CD8-positive, alpha-beta T cell (primary cell): ENCODE measurements at regions of chr14 and their contacts with region 1.

Region 1: DNA sequence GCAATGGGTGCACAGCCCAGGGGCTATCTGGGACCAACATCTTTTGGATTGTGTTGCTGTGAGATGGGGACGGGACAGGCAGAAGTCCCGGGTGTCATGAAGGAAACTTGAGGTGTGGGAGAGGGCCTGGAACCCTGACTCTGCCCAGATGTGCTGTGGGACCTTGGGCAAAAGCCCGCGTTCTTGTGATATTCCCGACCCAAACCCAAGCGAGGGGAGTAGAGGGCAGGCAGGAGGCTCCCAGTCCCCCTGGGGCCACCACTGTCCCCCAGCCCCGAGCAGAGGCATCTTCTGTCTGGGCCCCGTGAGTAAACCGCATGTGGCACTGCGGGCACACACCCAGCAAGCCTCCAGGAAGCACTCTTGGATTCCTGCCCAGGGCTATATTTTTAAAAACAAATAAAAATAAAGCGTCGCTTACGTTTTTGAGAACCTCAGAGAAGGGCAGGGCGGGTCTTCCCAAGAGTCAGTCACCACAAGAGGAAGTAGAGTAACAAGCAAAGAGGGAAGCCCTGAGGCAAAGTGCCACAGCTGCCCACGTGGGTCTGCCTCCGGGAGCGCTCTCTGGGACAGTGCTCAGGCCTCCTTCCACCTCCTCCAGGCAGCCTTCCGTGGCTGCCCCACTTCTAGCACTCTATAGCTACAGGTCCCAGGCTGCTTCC is 39.5 kb downstream of the BEGAIN start:
- DNase-seq: peak; percentile 8 to 91 (median 51)
- ATAC-seq: peak; percentile 52
- H3K4me3 ChIP-seq: peak overlapping the region in 1 of 2 experiments; percentile 68
- H3K4me3 Mint-ChIP-seq: peak overlapping the region; percentile 57
- H3K27ac ChIP-seq: peak overlapping the region; percentile 64 to 67
- H3K27ac Mint-ChIP-seq: peak overlapping the region; percentile 88
- H3K4me1 ChIP-seq: peaks cover 36% of the 10 kb centered on the region
- H3K4me1 Mint-ChIP-seq: peaks cover 24% of the 10 kb centered on the region
- H3K27me3 ChIP-seq: no peaks in the 10 kb centered on the region
- H3K27me3 Mint-ChIP-seq: no peaks in the 10 kb centered on the region
- CTCF ChIP-seq: no peak

Region 2: GRCh38 chr14:99480917-99481744 is 1066.6 kb before region 1 on chr14 and contains the start of gene CCNK:
- CTCF ChIA-PET with region 1: no interaction called
- POLR2A ChIA-PET with region 1: no interaction called
- intact Hi-C with region 1: loop called in 1 of 2 experiments (anchors 5 kb)
- DNase-seq: peak; percentile 100
- ATAC-seq: peak; percentile 87
- H3K4me3 ChIP-seq: peak within 1 kb of the TSS; percentile 97 to 99
- H3K4me3 Mint-ChIP-seq: peak within 1 kb of the TSS; percentile 99
- H3K27ac ChIP-seq: peak within 1 kb of the TSS; percentile 95 to 96
- H3K27ac Mint-ChIP-seq: peak within 1 kb of the TSS; percentile 99
- H3K4me1 ChIP-seq: peaks cover 38% of the 10 kb centered on the region
- H3K4me1 Mint-ChIP-seq: peaks cover 60% of the 10 kb centered on the region
- H3K27me3 ChIP-seq: no peaks in the 10 kb centered on the region
- H3K27me3 Mint-ChIP-seq: no peaks in the 10 kb centered on the region
- CTCF ChIP-seq: no peak
- total RNA-seq, gene CCNK: 171 to 177 TPM

Region 3: GRCh38 chr14:99971087-99971940 is 576.5 kb before region 1 on chr14:
- CTCF ChIA-PET with region 1: no interaction called
- POLR2A ChIA-PET with region 1: no interaction called
- intact Hi-C with region 1: loop called in 1 of 2 experiments (anchors 5 kb)
- DNase-seq: peak; percentile 62 to 89 (median 78)
- ATAC-seq: peak; percentile 92
- H3K4me3 ChIP-seq: peak overlapping the region; percentile 35 to 67
- H3K4me3 Mint-ChIP-seq: peak overlapping the region; percentile 78
- H3K27ac ChIP-seq: no peak overlapping the region
- H3K27ac Mint-ChIP-seq: no peak overlapping the region
- H3K4me1 ChIP-seq: peaks cover 11% of the 10 kb centered on the region
- H3K4me1 Mint-ChIP-seq: peaks cover 12% of the 10 kb centered on the region
- H3K27me3 ChIP-seq: no peaks in the 10 kb centered on the region
- H3K27me3 Mint-ChIP-seq: peaks cover 5% of the 10 kb centered on the region
- CTCF ChIP-seq: no peak

Region 4: GRCh38 chr14:100221533-100222223 is 326.1 kb before region 1 on chr14:
- CTCF ChIA-PET with region 1: no interaction called
- POLR2A ChIA-PET with region 1: no interaction called
- intact Hi-C with region 1: loop called in 1 of 2 experiments (anchors 5 kb)
- DNase-seq: peak; percentile 40 to 85 (median 74)
- ATAC-seq: peak; percentile 96
- H3K4me3 ChIP-seq: peak overlapping the region; percentile 68 to 95
- H3K4me3 Mint-ChIP-seq: no peak overlapping the region
- H3K27ac ChIP-seq: peak overlapping the region; percentile 76 to 77
- H3K27ac Mint-ChIP-seq: no peak overlapping the region
- H3K4me1 ChIP-seq: peaks cover 45% of the 10 kb centered on the region
- H3K4me1 Mint-ChIP-seq: peaks cover 7% of the 10 kb centered on the region
- H3K27me3 ChIP-seq: no peaks in the 10 kb centered on the region
- H3K27me3 Mint-ChIP-seq: no peaks in the 10 kb centered on the region
- CTCF ChIP-seq: no peak

Region 5: GRCh38 chr14:100306420-100307219 is 241.1 kb before region 1 on chr14 and contains the start of gene SLC25A29:
- CTCF ChIA-PET with region 1: no interaction called
- POLR2A ChIA-PET with region 1: no interaction called
- intact Hi-C with region 1: loop called in 1 of 2 experiments (anchors 10 kb)
- DNase-seq: peak; percentile 39 to 89 (median 76)
- ATAC-seq: peak; percentile 77
- H3K4me3 ChIP-seq: peak within 1 kb of the TSS; percentile 60 to 76
- H3K4me3 Mint-ChIP-seq: peak within 1 kb of the TSS; percentile 86
- H3K27ac ChIP-seq: no peak within 1 kb of the TSS
- H3K27ac Mint-ChIP-seq: peak within 1 kb of the TSS; percentile 60
- H3K4me1 ChIP-seq: peaks cover 18% of the 10 kb centered on the region
- H3K4me1 Mint-ChIP-seq: peaks cover 18% of the 10 kb centered on the region
- H3K27me3 ChIP-seq: no peaks in the 10 kb centered on the region
- H3K27me3 Mint-ChIP-seq: no peaks in the 10 kb centered on the region
- CTCF ChIP-seq: no peak
- total RNA-seq, gene SLC25A29: 19.4 to 22.8 TPM

Region 6: GRCh38 chr14:100815478-100816285 is 267.9 kb after region 1 on chr14:
- CTCF ChIA-PET with region 1: no interaction called
- POLR2A ChIA-PET with region 1: no interaction called
- intact Hi-C with region 1: no loop called
- DNase-seq: no peak
- ATAC-seq: no peak
- H3K4me3 ChIP-seq: no peak overlapping the region
- H3K4me3 Mint-ChIP-seq: no peak overlapping the region
- H3K27ac ChIP-seq: no peak overlapping the region
- H3K27ac Mint-ChIP-seq: no peak overlapping the region
- H3K4me1 ChIP-seq: no peaks in the 10 kb centered on the region
- H3K4me1 Mint-ChIP-seq: no peaks in the 10 kb centered on the region
- H3K27me3 ChIP-seq: no peaks in the 10 kb centered on the region
- H3K27me3 Mint-ChIP-seq: peaks cover 15% of the 10 kb centered on the region
- CTCF ChIP-seq: no peak